ENCODE measurements at regions of chr1 and their contacts with region 1.

Region 1: DNA sequence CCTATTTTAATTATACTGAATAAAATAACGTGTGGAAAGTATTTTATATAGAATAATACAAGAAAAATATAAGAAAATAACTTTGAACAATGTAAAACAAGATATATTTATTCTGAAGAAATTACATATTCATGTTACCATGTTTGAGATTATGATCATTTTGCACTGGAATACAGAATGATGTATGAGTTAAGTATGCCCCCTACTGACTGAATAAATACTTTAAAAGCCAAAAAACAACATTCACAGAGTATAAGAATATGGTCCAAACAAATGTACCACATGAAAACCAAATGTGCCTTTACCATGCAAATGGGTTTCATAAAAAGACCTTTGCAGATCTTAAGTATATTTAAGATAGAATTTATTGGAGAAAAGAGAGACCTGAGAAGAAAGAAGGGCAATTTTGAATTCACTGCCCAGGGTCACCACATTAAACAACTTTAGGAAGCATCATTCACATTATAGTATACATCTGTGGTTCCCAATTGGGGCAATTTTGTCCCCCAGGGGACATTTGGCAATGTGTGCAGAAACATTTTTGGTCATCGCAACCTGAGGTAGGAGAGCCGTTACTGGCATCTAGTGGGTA is 136.6 kb upstream of the GFI1 start:
- DNase-seq: no peak

Region 2: DNA sequence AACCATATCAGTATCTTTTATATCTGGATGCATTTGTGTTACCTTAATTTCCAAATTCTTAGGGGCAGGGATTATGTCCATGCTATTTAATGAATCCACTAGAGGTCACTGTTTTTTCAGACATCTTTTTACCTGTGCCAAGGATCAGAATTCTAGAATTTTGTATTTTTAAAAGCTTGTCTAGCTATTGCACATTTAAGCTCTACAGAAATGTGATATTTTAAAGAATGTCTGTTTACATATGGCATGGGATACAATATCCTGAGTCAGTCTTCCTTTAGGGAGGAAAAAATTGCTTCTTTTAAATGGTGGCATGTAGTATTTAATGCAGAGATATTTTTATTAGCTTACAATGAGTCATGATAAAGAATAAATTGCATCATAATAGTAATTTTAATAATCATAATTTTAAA is 313.1 kb before region 1 on chr1:
- intact Hi-C with region 1: loop called (anchors 5 kb)
- DNase-seq: no peak